ACHN (cell line): ENCODE measurements at regions of chr6 and their contacts with region 1.

Region 1: GRCh38 chr6:35731736-35732532 is 4.9 kb upstream of the ARMC12 start:
- DNase-seq: peak; percentile 82

Region 2: GRCh38 chr6:35552285-35552917 is 179.5 kb before region 1 on chr6:
- in situ Hi-C with region 1: loop called (anchors 25 kb)
- DNase-seq: peak; percentile 29

Region 3: GRCh38 chr6:35844290-35844689 is 112.4 kb after region 1 on chr6:
- in situ Hi-C with region 1: no loop called
- DNase-seq: no peak